ENCODE measurements at regions of chr10 and their contacts with region 1.

Region 1: DNA sequence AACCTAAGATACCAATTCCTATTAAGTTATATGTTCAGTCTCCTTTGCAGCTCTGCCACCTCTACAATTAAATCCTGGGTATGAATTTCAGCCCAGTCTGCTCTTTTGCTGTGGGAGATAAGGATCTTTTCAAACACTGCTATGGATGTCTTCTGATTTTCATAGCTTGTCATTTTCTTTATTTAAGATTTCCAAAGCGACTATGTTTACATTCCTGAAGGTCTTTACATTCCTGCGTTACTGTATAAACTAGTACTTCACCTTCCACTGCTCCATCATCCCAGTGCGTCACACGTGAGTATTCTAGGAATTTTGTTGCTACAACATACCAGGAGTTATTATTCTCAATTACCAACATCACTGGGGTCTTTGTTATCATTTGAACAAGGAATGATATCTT is 944.6 kb downstream of the SORCS3 start:
- H3K4me3 Mint-ChIP-seq: no peak overlapping the region
- H3K27ac Mint-ChIP-seq: no peak overlapping the region
- H3K4me1 Mint-ChIP-seq: no peaks in the 10 kb centered on the region
- H3K27me3 Mint-ChIP-seq: no peaks in the 10 kb centered on the region

Region 2: GRCh38 chr10:105534086-105534485 is 51.6 kb before region 1 on chr10:
- intact Hi-C with region 1: loop called (anchors 2 kb)
- H3K4me3 Mint-ChIP-seq: no peak overlapping the region
- H3K27ac Mint-ChIP-seq: no peak overlapping the region
- H3K4me1 Mint-ChIP-seq: no peaks in the 10 kb centered on the region
- H3K27me3 Mint-ChIP-seq: no peaks in the 10 kb centered on the region

Measured in dendritic cell treated with granulocyte-macrophage colony-stimulating factor and Interleukin-4, amounts not matched to agents 40 ng/mL and 50 ng/mL, for 4 days (primary cell).